CD8-positive, alpha-beta T cell (primary cell): ENCODE measurements at regions of chr2 and their contacts with region 1.

Region 1: GRCh38 chr2:43637030-43637803 is at the start of gene PLEKHH2:
- DNase-seq: peak; percentile 75 to 91 (median 87)
- ATAC-seq: peak; percentile 100
- H3K4me3 ChIP-seq: peak within 1 kb of the TSS; percentile 49 to 67
- H3K4me3 Mint-ChIP-seq: peak within 1 kb of the TSS; percentile 87
- H3K27ac ChIP-seq: peak within 1 kb of the TSS in 1 of 2 experiments; percentile 3
- H3K27ac Mint-ChIP-seq: no peak within 1 kb of the TSS
- H3K4me1 ChIP-seq: peaks cover 8% of the 10 kb centered on the region
- H3K4me1 Mint-ChIP-seq: peaks cover 17% of the 10 kb centered on the region
- H3K27me3 ChIP-seq: peaks cover 0 to 4% of the 10 kb centered on the region in 2 experiments
- H3K27me3 Mint-ChIP-seq: peaks cover 37% of the 10 kb centered on the region
- CTCF ChIP-seq: no peak
- total RNA-seq, gene PLEKHH2: 1.5 to 1.7 TPM

Region 2: GRCh38 chr2:43611987-43612894 is 25.0 kb before region 1 on chr2:
- CTCF ChIA-PET with region 1: no interaction called
- POLR2A ChIA-PET with region 1: no interaction called
- intact Hi-C with region 1: loop called in 1 of 2 experiments (anchors 2 kb)
- DNase-seq: peak; percentile 52 to 81 (median 72)
- ATAC-seq: peak; percentile 99
- H3K4me3 ChIP-seq: no peak overlapping the region
- H3K4me3 Mint-ChIP-seq: no peak overlapping the region
- H3K27ac ChIP-seq: no peak overlapping the region
- H3K27ac Mint-ChIP-seq: no peak overlapping the region
- H3K4me1 ChIP-seq: no peaks in the 10 kb centered on the region
- H3K4me1 Mint-ChIP-seq: no peaks in the 10 kb centered on the region
- H3K27me3 ChIP-seq: no peaks in the 10 kb centered on the region
- H3K27me3 Mint-ChIP-seq: peaks cover 7% of the 10 kb centered on the region
- CTCF ChIP-seq: peak; percentile 74

Region 3: GRCh38 chr2:43689989-43690388 is 52.8 kb after region 1 on chr2:
- CTCF ChIA-PET with region 1: no interaction called
- POLR2A ChIA-PET with region 1: no interaction called
- intact Hi-C with region 1: no loop called
- DNase-seq: no peak
- ATAC-seq: no peak
- H3K4me3 ChIP-seq: no peak overlapping the region
- H3K4me3 Mint-ChIP-seq: no peak overlapping the region
- H3K27ac ChIP-seq: no peak overlapping the region
- H3K27ac Mint-ChIP-seq: no peak overlapping the region
- H3K4me1 ChIP-seq: peaks cover 2% of the 10 kb centered on the region
- H3K4me1 Mint-ChIP-seq: no peaks in the 10 kb centered on the region
- H3K27me3 ChIP-seq: no peaks in the 10 kb centered on the region
- H3K27me3 Mint-ChIP-seq: peaks cover 17% of the 10 kb centered on the region
- CTCF ChIP-seq: no peak

Region 4: DNA sequence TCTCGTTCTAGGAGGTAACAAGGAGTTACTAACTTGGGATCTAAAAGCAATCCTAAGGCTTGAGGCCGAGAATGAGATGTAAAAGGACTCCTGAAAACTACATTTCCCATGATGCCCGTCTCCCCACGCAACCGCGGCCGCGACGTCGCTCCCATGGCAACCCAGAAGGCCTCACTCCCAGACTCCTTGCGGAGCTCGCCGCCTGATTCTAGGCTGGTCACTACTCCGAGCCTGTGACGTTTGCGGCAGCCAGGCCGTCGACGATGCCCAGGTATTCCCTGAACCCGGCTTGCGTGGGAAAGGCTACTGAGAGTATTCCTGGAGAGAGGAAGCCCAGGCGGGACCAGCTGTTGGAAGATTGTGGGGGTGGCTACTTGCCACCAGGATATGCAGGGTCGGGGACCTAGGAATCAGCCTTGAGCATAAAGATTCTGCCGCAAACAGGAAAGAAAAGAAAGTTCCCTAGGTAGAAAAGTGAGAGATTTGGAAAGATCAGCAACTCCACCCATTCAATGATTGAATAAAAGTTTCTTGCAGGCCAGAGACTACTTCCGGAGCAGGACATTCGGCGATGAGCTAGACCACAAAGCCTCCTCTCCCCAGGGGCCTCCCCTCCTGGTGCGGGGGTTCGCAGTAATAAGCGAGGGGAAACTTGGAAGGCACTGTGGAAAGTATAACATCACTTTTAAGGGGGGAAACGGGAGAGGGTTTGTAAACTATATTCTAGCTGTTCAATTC is 136.8 kb after region 1 on chr2 and contains the start of gene DYNC2LI1:
- CTCF ChIA-PET with region 1: no interaction called
- POLR2A ChIA-PET with region 1: no interaction called
- intact Hi-C with region 1: loop called (anchors 2 to 10 kb)
- DNase-seq: peak; percentile 38 to 86 (median 70)
- ATAC-seq: peak; percentile 92
- H3K4me3 ChIP-seq: peak within 1 kb of the TSS; percentile 89 to 97
- H3K4me3 Mint-ChIP-seq: peak within 1 kb of the TSS; percentile 96
- H3K27ac ChIP-seq: peak within 1 kb of the TSS; percentile 48 to 54
- H3K27ac Mint-ChIP-seq: peak within 1 kb of the TSS; percentile 80
- H3K4me1 ChIP-seq: no peaks in the 10 kb centered on the region
- H3K4me1 Mint-ChIP-seq: peaks cover 15% of the 10 kb centered on the region
- H3K27me3 ChIP-seq: no peaks in the 10 kb centered on the region
- H3K27me3 Mint-ChIP-seq: peaks cover 8% of the 10 kb centered on the region
- CTCF ChIP-seq: no peak
- total RNA-seq, gene DYNC2LI1: 1.4 to 1.8 TPM

Region 5: GRCh38 chr2:44305882-44306281 is 668.7 kb after region 1 on chr2:
- CTCF ChIA-PET with region 1: no interaction called
- POLR2A ChIA-PET with region 1: no interaction called
- intact Hi-C with region 1: no loop called
- DNase-seq: no peak
- ATAC-seq: no peak
- H3K4me3 ChIP-seq: no peak overlapping the region
- H3K4me3 Mint-ChIP-seq: no peak overlapping the region
- H3K27ac ChIP-seq: no peak overlapping the region
- H3K27ac Mint-ChIP-seq: no peak overlapping the region
- H3K4me1 ChIP-seq: no peaks in the 10 kb centered on the region
- H3K4me1 Mint-ChIP-seq: no peaks in the 10 kb centered on the region
- H3K27me3 ChIP-seq: no peaks in the 10 kb centered on the region
- H3K27me3 Mint-ChIP-seq: peaks cover 2% of the 10 kb centered on the region
- CTCF ChIP-seq: no peak